ENCODE measurements at regions of chr13 and their contacts with region 1.

Region 1: GRCh38 chr13:30898678-30899241 is 7.3 kb upstream of the MEDAG start:
- DNase-seq: peak; percentile 57 to 79
- ATAC-seq: peak; percentile 85
- H3K4me3 ChIP-seq: no peak overlapping the region
- H3K27ac ChIP-seq: peak overlapping the region; percentile 81 to 99
- H3K4me1 ChIP-seq: peaks cover 15 to 19% of the 10 kb centered on the region in 2 donors
- H3K27me3 ChIP-seq: no peaks in the 10 kb centered on the region

Region 2: DNA sequence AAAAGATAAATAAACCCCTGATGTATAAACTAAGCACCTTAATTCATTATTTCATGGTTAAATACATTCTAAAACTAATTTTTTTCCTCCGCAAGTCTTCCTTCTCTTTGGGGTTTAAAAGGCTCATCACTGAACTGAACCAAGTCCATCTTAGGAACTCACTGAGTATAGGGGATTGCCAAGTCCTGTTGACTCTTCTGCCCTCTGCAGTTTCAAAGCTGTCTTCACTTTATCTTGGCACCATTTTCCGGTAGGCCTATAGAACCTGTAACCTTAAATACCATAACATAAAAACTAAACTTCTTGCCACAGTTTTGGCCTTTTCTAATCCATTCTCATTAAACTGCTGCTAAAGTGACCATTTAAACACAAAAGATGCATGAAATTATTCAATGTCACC is 347.6 kb before region 1 on chr13:
- intact Hi-C with region 1: no loop called
- DNase-seq: no peak
- ATAC-seq: no peak
- H3K4me3 ChIP-seq: no peak overlapping the region
- H3K27ac ChIP-seq: no peak overlapping the region
- H3K4me1 ChIP-seq: no peaks in the 10 kb centered on the region
- H3K27me3 ChIP-seq: no peaks in the 10 kb centered on the region

Region 3: GRCh38 chr13:30857636-30858035 is 41.1 kb before region 1 on chr13:
- intact Hi-C with region 1: no loop called
- DNase-seq: no peak
- ATAC-seq: no peak
- H3K4me3 ChIP-seq: no peak overlapping the region
- H3K27ac ChIP-seq: no peak overlapping the region
- H3K4me1 ChIP-seq: peaks cover 0 to 2% of the 10 kb centered on the region in 2 donors
- H3K27me3 ChIP-seq: no peaks in the 10 kb centered on the region

Region 4: GRCh38 chr13:30880856-30881155 is 18.0 kb before region 1 on chr13:
- intact Hi-C with region 1: loop called (anchors 2 kb)
- DNase-seq: no peak
- ATAC-seq: peak; percentile 92
- H3K4me3 ChIP-seq: no peak overlapping the region
- H3K27ac ChIP-seq: peak overlapping the region; percentile 96 to 97
- H3K4me1 ChIP-seq: peaks cover 2 to 21% of the 10 kb centered on the region in 2 donors
- H3K27me3 ChIP-seq: no peaks in the 10 kb centered on the region